Stomach (tissue), 19 donors: ENCODE measurements at regions of chr1 and their contacts with region 1.

Region 1: DNA sequence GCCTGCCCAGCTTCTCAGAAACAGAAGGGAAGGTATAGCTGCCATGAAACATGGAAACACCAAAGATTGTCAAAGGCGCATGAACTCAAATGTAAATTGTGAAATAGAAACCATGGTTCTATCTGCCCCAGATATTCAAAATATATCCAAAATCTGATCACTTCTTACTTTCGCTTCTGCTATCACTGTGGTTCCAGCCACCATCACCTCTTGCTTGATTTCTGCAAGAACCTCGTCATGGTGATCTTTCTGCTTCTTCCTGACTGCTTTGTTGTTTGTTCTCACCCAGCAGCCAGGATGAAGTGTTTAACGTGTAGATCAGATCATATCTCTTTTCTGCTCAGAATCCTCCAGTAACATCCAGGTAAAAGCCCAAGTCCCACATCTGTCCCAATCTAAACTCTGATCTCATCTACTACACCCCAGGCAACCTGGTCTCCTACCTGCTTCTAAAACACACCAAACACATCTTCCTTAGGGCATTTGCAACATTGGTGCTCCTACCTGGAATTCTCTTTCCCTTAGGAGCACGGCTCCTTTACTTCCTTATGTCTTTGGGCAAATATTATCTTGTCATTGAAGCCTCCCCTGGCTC is 10.5 kb upstream of the LMO4 start:
- DNase-seq: no peak
- H3K4me3 ChIP-seq: no peak overlapping the region
- H3K27ac ChIP-seq: no peak overlapping the region
- H3K4me1 ChIP-seq: no peaks in the 10 kb centered on the region
- H3K27me3 ChIP-seq: no peaks in the 10 kb centered on the region
- CTCF ChIP-seq: no peak
- EP300 ChIP-seq: no peak
- POLR2A ChIP-seq: no peak

Region 2: GRCh38 chr1:87226341-87226760 is 91.8 kb before region 1 on chr1:
- intact Hi-C with region 1: no loop called
- DNase-seq: peak; percentile 66 to 91
- H3K4me3 ChIP-seq: no peak overlapping the region
- H3K27ac ChIP-seq: peak overlapping the region in 4 of 5 donors; percentile 20 to 65 (median 41)
- H3K4me1 ChIP-seq: peaks cover 0 to 9% (median 5%) of the 10 kb centered on the region in 4 donors
- H3K27me3 ChIP-seq: no peaks in the 10 kb centered on the region
- CTCF ChIP-seq: no peak
- EP300 ChIP-seq: no peak
- POLR2A ChIP-seq: no peak

Region 3: GRCh38 chr1:87942165-87942564 is 624.0 kb after region 1 on chr1:
- intact Hi-C with region 1: loop called (anchors 10 kb)
- DNase-seq: no peak
- H3K4me3 ChIP-seq: no peak overlapping the region
- H3K27ac ChIP-seq: peak overlapping the region in 1 of 5 donors; percentile 44
- H3K4me1 ChIP-seq: no peaks in the 10 kb centered on the region
- H3K27me3 ChIP-seq: no peaks in the 10 kb centered on the region
- CTCF ChIP-seq: no peak
- EP300 ChIP-seq: no peak
- POLR2A ChIP-seq: no peak